GM10248 (cell line): ENCODE measurements at regions of chr21 and their contacts with region 1.

Region 1: GRCh38 chr21:33127154-33127893 is 57.4 kb downstream of the OLIG1 start:
- DNase-seq: peak; percentile 73
- CTCF ChIP-seq: peak; percentile 72

Region 2: GRCh38 chr21:32834916-32835235 is 292.4 kb before region 1 on chr21:
- CTCF ChIA-PET with region 1: interaction called, 27 read pairs
- POLR2A ChIA-PET with region 1: no interaction called
- DNase-seq: no peak
- CTCF ChIP-seq: no peak

Region 3: GRCh38 chr21:32844653-32845436 is 282.5 kb before region 1 on chr21:
- CTCF ChIA-PET with region 1: interaction called, 27 read pairs
- POLR2A ChIA-PET with region 1: no interaction called
- DNase-seq: no peak
- CTCF ChIP-seq: no peak

Region 4: DNA sequence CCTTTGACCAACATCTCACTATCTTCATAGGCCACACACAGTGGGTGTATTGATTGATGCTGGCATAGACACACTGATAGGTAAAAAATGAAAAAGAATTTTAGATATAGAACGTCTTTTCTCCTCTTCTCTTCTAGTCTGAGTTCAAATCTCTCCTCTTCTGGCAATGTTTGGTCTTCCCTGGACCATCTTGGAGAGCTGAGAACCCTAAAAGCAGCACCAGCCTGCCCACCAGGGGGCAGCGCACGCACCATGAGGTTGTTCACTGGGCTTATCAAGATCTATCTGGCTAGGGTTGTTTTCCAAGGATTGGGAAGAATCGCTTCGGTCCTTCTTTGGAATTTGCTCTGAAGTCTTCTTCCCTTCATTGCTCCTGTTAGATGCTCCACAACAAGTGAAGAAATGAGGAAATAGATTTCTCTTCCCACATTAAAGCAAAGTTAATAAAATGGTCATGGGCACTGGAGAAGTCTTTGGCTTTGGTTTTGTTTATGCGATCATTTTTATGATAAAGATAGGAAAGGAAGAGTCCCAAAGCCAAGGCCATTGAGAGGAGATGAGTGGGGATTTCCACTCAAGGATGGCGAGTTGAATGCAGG is 205.6 kb before region 1 on chr21:
- CTCF ChIA-PET with region 1: interaction called, 21 read pairs
- POLR2A ChIA-PET with region 1: no interaction called
- DNase-seq: peak; percentile 29
- CTCF ChIP-seq: peak; percentile 60

Region 5: GRCh38 chr21:32994305-32994704 is 133.0 kb before region 1 on chr21:
- CTCF ChIA-PET with region 1: interaction called, 17 read pairs
- POLR2A ChIA-PET with region 1: no interaction called
- DNase-seq: no peak
- CTCF ChIP-seq: peak; percentile 11

Region 6: GRCh38 chr21:33063907-33064622 is 63.3 kb before region 1 on chr21:
- CTCF ChIA-PET with region 1: interaction called, 11 read pairs
- POLR2A ChIA-PET with region 1: no interaction called
- DNase-seq: no peak
- CTCF ChIP-seq: no peak

Region 7: GRCh38 chr21:33105088-33105487 is 22.2 kb before region 1 on chr21:
- CTCF ChIA-PET with region 1: no interaction called
- POLR2A ChIA-PET with region 1: no interaction called
- DNase-seq: no peak
- CTCF ChIP-seq: no peak

Region 8: DNA sequence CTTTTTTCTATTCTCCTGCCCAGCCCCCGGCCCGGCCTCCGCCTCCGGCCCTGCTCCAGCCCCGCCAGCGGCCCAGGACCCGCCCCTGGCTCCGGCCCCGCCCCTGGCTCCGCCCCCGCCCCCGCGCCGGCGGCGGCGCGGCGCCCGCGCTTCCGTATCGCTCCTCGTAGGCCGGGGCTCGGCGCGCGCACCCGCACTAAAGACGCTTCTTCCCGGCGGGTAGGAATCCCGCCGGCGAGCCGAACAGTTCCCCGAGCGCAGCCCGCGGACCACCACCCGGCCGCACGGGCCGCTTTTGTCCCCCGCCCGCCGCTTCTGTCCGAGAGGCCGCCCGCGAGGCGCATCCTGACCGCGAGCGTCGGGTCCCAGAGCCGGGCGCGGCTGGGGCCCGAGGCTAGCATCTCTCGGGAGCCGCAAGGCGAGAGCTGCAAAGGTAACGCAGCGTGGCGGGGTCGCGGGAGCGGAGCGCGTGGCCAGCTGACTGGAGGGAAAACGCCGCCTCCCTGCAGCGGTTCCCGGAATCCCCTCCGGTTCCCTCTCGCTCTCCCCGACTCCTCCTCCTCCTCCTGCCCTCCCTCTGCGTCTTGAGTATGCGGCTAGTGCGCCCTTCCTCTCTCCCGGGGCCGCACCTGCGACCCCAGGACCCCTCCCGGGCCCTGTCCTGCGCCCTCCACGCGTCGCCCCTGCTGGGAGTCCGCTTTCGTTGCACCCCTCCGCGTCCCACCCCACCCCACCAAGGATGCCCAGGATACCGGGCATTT is 102.6 kb after region 1 on chr21 and contains the start of gene IFNAR2:
- CTCF ChIA-PET with region 1: no interaction called
- POLR2A ChIA-PET with region 1: no interaction called
- DNase-seq: peak; percentile 95
- CTCF ChIP-seq: no peak

Region 9: DNA sequence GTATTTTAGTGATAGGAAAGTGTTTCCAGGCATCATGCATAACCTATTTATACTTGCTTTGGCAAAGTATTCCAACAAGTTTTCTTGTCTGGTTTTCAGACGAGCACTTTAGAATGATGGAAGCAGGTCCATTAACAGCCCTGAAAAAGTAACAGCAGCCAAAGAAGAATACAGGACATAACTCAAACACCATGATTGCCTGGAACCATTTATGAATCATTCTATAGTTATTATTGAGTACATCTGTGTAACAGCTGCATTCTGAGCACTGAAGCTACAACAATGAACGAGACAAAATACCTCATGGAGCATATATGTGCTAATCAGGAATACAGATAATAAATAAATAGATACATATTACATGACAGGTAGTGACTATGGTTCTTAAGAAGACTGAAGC is 151.4 kb after region 1 on chr21:
- CTCF ChIA-PET with region 1: no interaction called
- POLR2A ChIA-PET with region 1: no interaction called
- DNase-seq: no peak
- CTCF ChIP-seq: no peak

Region 10: DNA sequence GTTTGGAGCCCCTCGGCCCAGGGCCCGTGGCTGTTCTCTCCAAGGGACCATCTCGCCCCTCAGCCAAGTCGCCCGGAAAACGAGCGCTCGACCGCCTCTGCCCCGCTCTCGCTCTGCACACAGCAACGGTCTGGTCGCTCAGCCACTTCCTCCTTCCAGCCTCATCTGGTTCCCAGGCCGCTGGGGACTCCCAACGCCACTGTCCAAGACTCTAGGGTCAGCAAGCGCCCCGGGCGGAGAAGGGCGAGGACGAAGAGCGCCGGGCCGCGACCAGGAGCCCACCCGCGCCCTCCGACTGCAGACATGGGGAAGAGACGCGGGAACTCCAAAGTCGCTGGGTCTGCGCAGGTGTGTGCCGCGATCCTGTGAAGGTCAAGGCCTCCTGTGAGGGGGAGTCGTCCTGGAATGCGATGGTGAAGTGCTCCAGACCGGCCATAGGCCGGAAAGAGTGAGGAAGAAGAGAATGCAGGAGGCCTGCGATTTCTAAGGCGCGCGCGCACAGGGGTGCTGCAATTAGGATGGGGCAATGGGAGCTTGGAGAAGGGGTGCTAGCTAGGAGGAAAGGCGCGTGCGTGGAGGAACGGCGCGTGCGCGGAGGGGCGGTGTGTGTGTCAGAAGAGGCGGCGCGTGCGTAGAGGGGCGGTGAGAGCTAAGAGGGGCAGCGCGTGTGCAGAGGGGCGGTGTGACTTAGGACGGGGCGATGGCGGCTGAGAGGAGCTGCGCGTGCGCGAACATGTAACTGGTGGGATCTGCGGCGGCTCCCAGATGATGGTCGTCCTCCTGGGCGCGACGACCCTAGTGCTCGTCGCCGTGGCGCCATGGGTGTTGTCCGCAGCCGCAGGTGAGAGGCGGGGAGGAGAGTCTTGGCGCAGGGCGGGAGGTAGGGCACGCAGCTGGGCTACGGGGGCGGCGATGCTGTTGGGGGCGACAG is 197.2 kb after region 1 on chr21 and contains the start of gene IFNAR1:
- CTCF ChIA-PET with region 1: no interaction called
- POLR2A ChIA-PET with region 1: no interaction called
- DNase-seq: peak; percentile 96
- CTCF ChIP-seq: no peak